HepG2 (cell line): ENCODE measurements at regions of chr11 and their contacts with region 1.

Region 1: GRCh38 chr11:47152953-47153950 is 23.4 kb downstream of the ARFGAP2 start:
- DNase-seq: peak; percentile 63
- ATAC-seq: peak; percentile 83
- H3K4me3 ChIP-seq: no peak overlapping the region
- H3K27ac ChIP-seq: no peak overlapping the region
- H3K4me1 ChIP-seq: no peaks in the 10 kb centered on the region
- H3K27me3 ChIP-seq: no peaks in the 10 kb centered on the region; a peak in 1 of 5 replicates
- CTCF ChIP-seq: peak; percentile 96
- EP300 ChIP-seq: no peak
- POLR2A ChIP-seq: no peak
- RAD21 ChIP-seq: peak; percentile 97

Region 2: GRCh38 chr11:46889689-46890475 is 263.4 kb before region 1 on chr11:
- CTCF ChIA-PET with region 1: interaction called, 57 read pairs
- POLR2A ChIA-PET with region 1: no interaction called
- in situ Hi-C with region 1: no loop called
- intact Hi-C with region 1: loop called (anchors 1 kb)
- DNase-seq: peak; percentile 65
- ATAC-seq: peak; percentile 88
- H3K4me3 ChIP-seq: no peak overlapping the region
- H3K27ac ChIP-seq: no peak overlapping the region
- H3K4me1 ChIP-seq: no peaks in the 10 kb centered on the region
- H3K27me3 ChIP-seq: no peaks in the 10 kb centered on the region
- CTCF ChIP-seq: peak; percentile 86
- EP300 ChIP-seq: no peak
- POLR2A ChIP-seq: no peak
- RAD21 ChIP-seq: peak; percentile 81

Region 3: DNA sequence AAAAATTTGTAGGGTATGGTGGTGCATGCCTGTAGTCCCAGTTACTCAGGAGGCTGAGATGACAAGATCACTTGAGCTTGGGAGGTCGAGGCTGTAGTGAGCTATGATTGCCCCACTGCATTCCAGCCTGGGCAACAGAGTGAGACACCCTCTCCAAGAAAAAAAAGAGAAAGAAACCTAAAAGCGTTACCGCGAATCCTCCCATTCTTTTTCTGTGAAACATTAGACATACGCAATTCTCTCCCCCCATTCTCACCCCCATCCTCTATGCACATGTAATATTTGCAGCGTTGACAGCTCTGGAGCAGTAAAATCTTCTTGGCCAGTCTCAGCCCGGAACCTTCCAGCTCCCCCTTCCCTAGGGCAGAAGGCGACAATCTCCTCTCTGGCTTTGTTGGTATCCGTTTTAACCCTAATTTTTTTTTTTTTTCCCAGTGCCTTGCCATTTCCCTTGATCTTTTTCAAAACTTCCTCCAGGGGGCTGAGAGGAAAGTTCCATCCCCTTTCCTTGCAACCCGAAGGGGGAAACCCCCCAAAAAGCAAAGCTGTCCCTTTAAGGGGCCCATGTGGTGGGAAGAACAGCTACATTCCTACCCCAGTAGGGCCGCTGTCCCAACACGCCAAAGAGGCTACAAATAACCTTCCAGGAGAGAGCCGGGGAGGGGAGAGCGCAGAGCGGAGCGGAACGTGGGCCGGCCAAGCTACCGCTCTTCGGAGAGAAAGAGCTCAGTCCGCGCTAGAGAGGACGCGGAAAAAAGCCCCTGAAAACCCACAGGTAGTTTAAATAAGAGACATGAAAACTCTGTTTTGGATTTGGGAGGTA is 236.8 kb before region 1 on chr11:
- CTCF ChIA-PET with region 1: interaction called, 15 read pairs
- POLR2A ChIA-PET with region 1: interaction called, 8 read pairs
- in situ Hi-C with region 1: loop called (anchors 5 kb)
- intact Hi-C with region 1: loop called (anchors 1 kb)
- DNase-seq: peak; percentile 55
- ATAC-seq: peak; percentile 76
- H3K4me3 ChIP-seq: peak overlapping the region; percentile 68 to 91 (median 75)
- H3K27ac ChIP-seq: peak overlapping the region; percentile 71
- H3K4me1 ChIP-seq: peaks cover 35% of the 10 kb centered on the region
- H3K27me3 ChIP-seq: peaks cover 2 to 5% of the 10 kb centered on the region in 2 experiments; a peak in 1 of 5 replicates
- CTCF ChIP-seq: 0 out of 2 replicates have a peak, but pooled peaks have one; percentile 19
- EP300 ChIP-seq: no peak
- POLR2A ChIP-seq: no peak
- RAD21 ChIP-seq: no peak

Region 4: GRCh38 chr11:46984987-46985386 is 168.3 kb before region 1 on chr11:
- CTCF ChIA-PET with region 1: no interaction called
- POLR2A ChIA-PET with region 1: no interaction called
- in situ Hi-C with region 1: no loop called
- intact Hi-C with region 1: loop called (anchors 1 kb)
- DNase-seq: peak; percentile 84
- ATAC-seq: peak; percentile 94
- H3K4me3 ChIP-seq: peak overlapping the region in 1 of 3 experiments; percentile 4; a peak in 2 of 6 replicates
- H3K27ac ChIP-seq: peak overlapping the region; percentile 56
- H3K4me1 ChIP-seq: peaks cover 32% of the 10 kb centered on the region
- H3K27me3 ChIP-seq: no peaks in the 10 kb centered on the region
- CTCF ChIP-seq: no peak
- EP300 ChIP-seq: peak in 1 of 2 experiments; percentile 56; a peak in 1 of 4 replicates
- POLR2A ChIP-seq: no peak
- RAD21 ChIP-seq: no peak

Region 5: GRCh38 chr11:47004595-47005033 is 148.6 kb before region 1 on chr11:
- CTCF ChIA-PET with region 1: no interaction called
- POLR2A ChIA-PET with region 1: no interaction called
- in situ Hi-C with region 1: no loop called
- intact Hi-C with region 1: loop called (anchors 1 kb)
- DNase-seq: peak; percentile 96
- ATAC-seq: peak; percentile 100
- H3K4me3 ChIP-seq: peak overlapping the region in 1 of 3 experiments; percentile 6; a peak in 1 of 6 replicates
- H3K27ac ChIP-seq: peak overlapping the region; percentile 53
- H3K4me1 ChIP-seq: peaks cover 25% of the 10 kb centered on the region
- H3K27me3 ChIP-seq: no peaks in the 10 kb centered on the region
- CTCF ChIP-seq: peak; percentile 57
- EP300 ChIP-seq: peak in 1 of 2 experiments; percentile 60; a peak in 2 of 4 replicates
- POLR2A ChIP-seq: no peak
- RAD21 ChIP-seq: 0 out of 2 replicates have a peak, but pooled peaks have one; percentile 17